ENCODE measurements at regions of chr15 and their contacts with region 1.

Region 1: GRCh38 chr15:63504247-63504978 is at the start of gene USP3:
- DNase-seq: peak; percentile 84 to 97 (median 93)

Region 2: DNA sequence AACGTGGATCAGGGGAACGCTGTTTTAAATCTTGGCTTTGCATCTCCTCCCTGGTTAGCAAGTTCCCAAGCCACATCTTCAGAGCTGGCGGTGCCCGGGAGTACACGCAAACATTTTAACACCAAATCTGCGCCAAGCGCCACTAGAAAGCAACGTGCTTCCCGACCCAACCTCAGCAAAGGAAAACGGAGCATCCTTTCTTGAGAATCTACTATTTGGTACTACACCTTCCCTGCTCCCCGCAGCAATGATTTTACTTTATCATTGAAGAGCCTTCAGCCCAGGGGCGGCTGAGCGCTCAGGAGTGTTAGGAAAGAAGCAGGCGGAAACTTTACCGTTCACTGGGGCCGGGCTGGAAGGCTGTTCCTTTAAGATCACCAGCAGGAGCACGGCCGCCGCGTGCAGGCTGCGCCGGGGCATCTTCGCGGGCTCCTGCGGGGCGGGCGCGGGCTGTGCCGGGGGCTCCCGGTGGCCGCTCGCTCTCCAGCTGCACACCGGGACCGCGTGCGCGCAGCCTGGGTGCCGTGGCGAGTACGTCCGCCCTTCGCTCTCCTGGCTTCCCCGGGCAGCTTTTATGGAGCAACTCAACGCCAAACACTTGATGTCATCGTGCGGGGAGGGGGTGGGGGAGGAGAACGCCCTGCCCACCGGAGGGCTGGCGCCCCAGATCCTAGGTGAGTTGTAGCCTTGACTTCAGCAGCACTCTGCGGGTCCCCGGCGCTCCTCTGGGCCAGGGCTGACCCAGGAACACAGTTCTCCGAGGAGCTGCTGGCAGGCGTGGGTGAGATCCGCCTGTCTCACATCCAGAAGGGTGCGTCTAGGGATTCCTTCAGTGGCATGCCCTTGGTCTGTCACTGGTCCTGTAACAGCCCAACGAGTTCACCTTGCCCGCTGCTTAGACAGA is 122.9 kb before region 1 on chr15 and contains the start of gene CA12:
- intact Hi-C with region 1: no loop called
- DNase-seq: peak in 35 of 42 donors; percentile 25 to 77 (median 47)

Region 3: DNA sequence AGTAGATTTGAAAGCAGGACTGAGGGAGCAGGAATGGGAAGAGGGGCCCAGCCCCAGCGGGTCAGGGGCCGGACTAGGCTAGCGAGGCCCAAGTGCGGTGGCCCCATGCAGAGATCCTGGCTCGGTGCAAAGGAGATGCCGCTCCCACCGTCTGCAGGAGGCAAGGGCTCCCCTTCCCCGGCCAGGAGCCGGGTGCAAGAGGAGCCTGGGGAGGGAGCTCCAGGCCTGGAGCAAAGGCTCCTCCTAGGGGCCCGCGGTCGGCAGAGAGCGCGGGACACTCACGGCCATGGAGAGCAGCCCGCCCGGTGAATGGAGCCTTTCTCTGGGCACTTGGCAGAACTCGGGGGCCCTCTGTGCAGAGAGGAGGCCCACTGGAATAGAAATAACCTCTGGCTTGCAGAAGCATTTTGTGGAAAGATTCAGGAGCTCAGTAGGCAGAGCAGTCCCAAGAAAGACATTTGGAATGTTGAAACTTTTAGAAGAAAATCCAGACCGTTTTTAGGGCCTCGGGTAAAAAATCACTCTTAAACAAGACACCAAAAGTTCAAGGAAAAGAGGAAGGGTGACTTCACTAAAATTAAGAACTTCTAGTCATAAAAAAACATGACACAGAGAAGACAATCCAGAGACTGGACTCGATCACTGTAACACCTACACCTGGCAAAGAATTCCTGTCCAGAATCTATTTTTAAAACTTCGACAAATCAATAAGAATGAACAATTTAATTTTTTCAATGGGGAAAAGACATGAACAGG is 43.0 kb before region 1 on chr15:
- intact Hi-C with region 1: loop called (anchors 5 kb)
- DNase-seq: peak; percentile 30 to 87 (median 67)

Region 4: DNA sequence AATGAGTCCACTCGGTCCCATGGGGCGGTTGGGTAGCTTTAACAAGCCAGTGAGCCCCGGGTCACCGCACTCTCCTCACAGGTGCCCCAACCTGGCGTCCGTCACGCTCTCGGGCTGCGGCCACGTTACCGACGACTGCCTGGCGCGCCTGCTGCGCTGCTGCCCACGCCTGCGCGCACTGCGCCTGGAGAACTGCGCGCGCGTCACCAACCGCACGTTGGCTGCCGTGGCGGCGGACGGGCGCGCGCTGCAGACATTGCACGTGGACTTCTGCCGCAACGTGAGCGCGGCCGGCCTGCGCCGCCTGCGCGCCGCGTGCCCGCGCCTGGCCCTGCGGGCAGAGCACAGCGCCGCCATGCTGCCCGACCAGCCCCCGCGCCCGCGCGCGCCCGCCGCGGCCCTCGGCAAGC is 96.2 kb after region 1 on chr15:
- intact Hi-C with region 1: loop called (anchors 2 kb)
- DNase-seq: peak; percentile 64 to 95 (median 88)